HEK293T (cell line): ENCODE measurements at regions of chr2 and their contacts with region 1.

Region 1: GRCh38 chr2:236193051-236193450 is 24.9 kb upstream of the GBX2 start:
- DNase-seq: no peak

Region 2: DNA sequence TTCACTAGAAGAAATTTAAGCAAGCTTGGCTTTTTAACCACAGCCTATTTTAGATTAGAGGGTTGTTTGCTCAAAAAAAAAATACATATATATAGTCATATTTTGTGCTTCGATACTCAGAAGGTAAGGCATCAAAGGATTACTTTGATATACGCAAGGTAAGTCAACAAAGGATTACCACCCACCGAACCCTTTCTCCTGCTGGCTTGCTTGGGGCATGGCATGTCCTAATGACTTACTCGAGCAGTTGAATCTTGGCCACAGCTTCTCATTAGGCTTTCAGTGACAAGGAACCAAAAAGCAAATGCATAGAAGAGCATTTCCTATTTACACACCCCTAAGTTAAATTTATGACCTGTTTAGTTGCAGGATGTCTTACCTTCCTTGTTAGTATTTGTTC is 403.5 kb before region 1 on chr2:
- CTCF ChIA-PET with region 1: interaction called, 11 read pairs
- POLR2A ChIA-PET with region 1: no interaction called
- DNase-seq: no peak